HepG2 (cell line): ENCODE measurements at regions of chr19 and their contacts with region 1.

Region 1: GRCh38 chr19:1020868-1021425 is at the start of gene TMEM259:
- DNase-seq: peak; percentile 92
- ATAC-seq: peak; percentile 82
- H3K4me3 ChIP-seq: peak within 1 kb of the TSS; percentile 69 to 92 (median 90)
- H3K27ac ChIP-seq: peak within 1 kb of the TSS; percentile 77
- H3K4me1 ChIP-seq: peaks cover 47% of the 10 kb centered on the region
- H3K27me3 ChIP-seq: no peaks in the 10 kb centered on the region; a peak in 1 of 5 replicates
- CTCF ChIP-seq: no peak
- EP300 ChIP-seq: no peak; a peak in 1 of 4 replicates
- POLR2A ChIP-seq: peak in 1 of 2 experiments; percentile 71; a peak in 3 of 4 replicates
- RAD21 ChIP-seq: no peak; the same call in none of the 2 replicates
- total RNA-seq, gene TMEM259: 20.5 and 64.7 TPM in 2 replicates

Region 2: GRCh38 chr19:952622-953444 is 68.1 kb before region 1 on chr19:
- CTCF ChIA-PET with region 1: no interaction called
- POLR2A ChIA-PET with region 1: no interaction called
- in situ Hi-C with region 1: no loop called
- intact Hi-C with region 1: loop called (anchors 2 kb)
- DNase-seq: peak; percentile 95
- ATAC-seq: peak; percentile 82
- H3K4me3 ChIP-seq: peak overlapping the region; percentile 31 to 70 (median 36); a peak in 5 of 6 replicates
- H3K27ac ChIP-seq: peak overlapping the region; percentile 99
- H3K4me1 ChIP-seq: peaks cover 86% of the 10 kb centered on the region
- H3K27me3 ChIP-seq: no peaks in the 10 kb centered on the region
- CTCF ChIP-seq: peak; percentile 32; the same call in 1 of the 2 replicates
- EP300 ChIP-seq: peak; percentile 98 to 99
- POLR2A ChIP-seq: peak; percentile 55 to 59; a peak in 3 of 4 replicates
- RAD21 ChIP-seq: peak; percentile 82